Activated CD4-positive, alpha-beta T cell treated with anti-CD3 and anti-CD28 coated beads, Interleukin-2, amount 10 ng/mL, durations not matched to agents 24 days and 14 days (primary cell): ENCODE measurements at regions of chr1 and their contacts with region 1.

Region 1: DNA sequence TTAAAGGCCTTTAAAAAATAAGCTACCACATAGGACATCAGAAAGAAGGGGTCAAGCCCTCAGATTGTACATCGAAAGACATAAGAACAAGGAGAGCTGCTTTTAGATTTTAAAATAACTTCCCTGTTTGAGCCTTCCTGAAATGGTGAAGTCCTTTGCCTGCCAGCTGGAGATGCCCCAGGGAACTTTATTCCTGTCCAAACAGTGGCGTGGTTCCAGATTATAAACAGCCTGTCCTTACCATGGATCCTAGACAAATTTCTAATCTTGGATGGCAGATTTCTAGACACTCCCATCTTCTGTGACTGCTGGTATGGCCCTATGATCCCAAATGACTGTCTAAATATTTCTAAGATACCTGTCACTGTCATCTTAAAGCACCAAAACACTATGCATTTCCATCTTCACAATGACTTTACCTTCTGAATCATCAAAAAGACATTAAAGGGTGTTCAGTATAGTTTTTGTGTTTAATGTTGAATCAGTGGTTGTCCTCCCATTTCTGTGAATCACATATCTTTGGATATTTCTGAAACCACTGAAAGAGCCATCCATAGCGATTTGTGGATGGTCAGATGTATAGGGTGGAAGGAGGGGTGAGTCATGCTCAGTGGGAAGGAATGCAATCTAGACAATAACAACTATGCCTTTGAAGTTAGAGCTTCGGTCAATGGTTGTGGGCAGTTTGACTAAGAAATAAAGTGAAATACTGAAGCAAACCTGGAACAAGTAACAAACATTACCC is 23.2 kb downstream of the ILDR2 start:
- DNase-seq: no peak
- H3K4me3 Mint-ChIP-seq: no peak overlapping the region
- H3K27ac Mint-ChIP-seq: peak overlapping the region; percentile 12
- H3K4me1 Mint-ChIP-seq: peaks cover 21% of the 10 kb centered on the region
- H3K27me3 Mint-ChIP-seq: peaks cover 10% of the 10 kb centered on the region

Region 2: DNA sequence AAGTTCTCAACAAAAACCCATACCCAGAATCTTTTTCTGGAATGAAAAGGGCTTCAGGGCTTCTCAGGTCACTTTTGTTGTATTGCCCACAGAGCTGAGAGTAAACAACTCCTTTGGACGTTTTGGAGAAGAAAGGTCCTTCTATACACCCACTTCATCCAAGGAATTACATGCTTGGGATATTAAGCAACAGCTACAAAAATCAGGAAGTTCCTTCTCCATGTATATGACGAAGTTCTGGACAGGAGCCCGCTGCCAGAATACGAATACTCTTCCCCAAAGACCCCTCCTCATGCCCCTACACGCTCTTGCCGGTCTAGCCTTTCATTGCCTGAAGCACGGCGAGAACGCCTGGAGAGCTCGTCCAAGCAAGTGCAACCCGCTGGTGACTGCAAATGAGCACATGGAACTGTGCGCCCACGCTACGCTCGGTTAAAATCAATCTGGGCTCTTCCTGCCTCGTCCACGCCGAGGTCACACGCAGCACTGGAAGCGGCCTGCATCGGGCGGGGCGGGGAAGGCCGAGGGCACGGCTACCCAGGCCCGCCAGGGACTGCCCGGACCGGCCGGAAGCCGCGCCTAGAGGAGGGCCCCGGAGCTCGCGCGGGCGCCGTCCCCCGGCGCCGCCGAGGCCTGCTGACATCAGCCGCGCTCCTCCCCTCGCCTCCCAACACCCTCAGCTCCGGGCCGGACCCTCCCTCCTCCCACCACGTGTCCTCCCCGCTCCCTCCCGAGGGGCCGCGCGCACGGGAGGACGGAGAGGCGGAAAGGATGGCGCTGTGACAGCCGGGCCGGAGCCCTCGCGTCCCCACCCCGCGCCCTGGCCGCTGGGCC is 113.2 kb before region 1 on chr1 and contains the start of gene POGK:
- intact Hi-C with region 1: loop called (anchors 1 kb)
- DNase-seq: peak; percentile 95
- H3K4me3 Mint-ChIP-seq: peak within 1 kb of the TSS; percentile 95
- H3K27ac Mint-ChIP-seq: peak within 1 kb of the TSS; percentile 98
- H3K4me1 Mint-ChIP-seq: peaks cover 39% of the 10 kb centered on the region
- H3K27me3 Mint-ChIP-seq: peaks cover 2% of the 10 kb centered on the region
- total RNA-seq, gene POGK: 52.4 and 53.9 TPM in 2 replicates

Region 3: DNA sequence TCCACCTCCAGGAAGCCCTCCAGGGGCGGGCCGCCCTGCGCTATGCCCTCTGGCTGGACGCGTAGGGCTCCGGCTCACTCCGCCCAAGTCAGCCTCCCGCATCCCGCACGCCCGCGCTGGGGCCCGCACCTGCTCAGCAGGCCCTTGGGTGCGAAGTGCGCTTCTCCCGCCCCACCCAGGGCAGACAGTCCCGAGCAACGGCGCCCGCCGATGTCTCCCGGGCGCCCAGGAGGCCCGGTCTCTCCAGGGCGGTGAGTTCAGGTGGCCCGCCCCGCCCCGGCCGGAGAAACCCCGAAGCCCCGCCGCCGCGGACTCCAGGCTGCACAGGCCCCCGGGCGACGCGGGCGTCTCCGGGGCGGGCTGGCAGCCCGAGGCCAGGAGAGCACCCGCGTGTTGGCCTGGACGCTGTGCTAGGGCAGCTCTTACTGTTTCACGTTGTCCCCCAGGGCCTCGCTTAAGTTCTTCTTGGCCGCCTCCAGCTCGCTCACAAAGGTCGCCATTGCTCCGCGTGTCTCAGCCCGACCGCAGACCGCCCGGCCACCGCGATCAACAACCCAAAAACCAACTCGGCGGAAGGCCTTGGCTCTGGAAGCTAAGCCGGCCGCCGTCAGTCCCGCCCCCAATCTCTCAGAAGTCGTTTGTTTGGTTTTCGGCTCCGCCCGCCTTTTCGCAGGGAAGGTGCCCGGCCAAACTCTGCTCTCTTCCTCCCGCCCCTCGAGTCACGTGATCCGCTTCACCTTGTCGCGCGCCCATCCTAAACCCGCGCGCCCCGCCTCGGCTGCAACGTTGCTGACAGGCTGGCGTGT is 76.2 kb before region 1 on chr1 and contains the start of gene TADA1:
- intact Hi-C with region 1: loop called (anchors 2 kb)
- DNase-seq: peak; percentile 99
- H3K4me3 Mint-ChIP-seq: peak within 1 kb of the TSS; percentile 91
- H3K27ac Mint-ChIP-seq: peak within 1 kb of the TSS; percentile 100
- H3K4me1 Mint-ChIP-seq: peaks cover 46% of the 10 kb centered on the region
- H3K27me3 Mint-ChIP-seq: peaks cover 7% of the 10 kb centered on the region
- total RNA-seq, gene TADA1: 17.0 and 18.4 TPM in 2 replicates

Region 4: DNA sequence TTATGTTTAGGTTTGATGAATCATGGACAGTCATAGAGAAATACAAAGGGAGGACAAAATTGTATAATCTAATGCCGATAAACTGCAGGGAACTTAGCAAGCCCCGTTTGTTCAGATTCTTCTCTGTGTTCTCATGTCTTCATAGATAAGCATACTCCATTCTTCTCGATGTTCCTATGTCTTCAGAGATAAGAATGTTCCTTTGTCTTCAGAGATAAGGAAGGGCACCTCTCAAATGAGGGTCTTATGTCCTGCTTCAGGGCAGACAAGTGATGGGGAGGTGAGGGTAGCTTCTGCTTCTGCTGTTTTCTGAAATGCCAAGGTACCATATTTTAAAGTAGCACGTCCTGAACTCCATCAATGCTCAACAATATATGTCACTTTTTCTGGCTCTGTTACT is 56.4 kb before region 1 on chr1:
- intact Hi-C with region 1: no loop called
- DNase-seq: no peak
- H3K4me3 Mint-ChIP-seq: no peak overlapping the region
- H3K27ac Mint-ChIP-seq: no peak overlapping the region
- H3K4me1 Mint-ChIP-seq: no peaks in the 10 kb centered on the region
- H3K27me3 Mint-ChIP-seq: peaks cover 51% of the 10 kb centered on the region

Region 5: DNA sequence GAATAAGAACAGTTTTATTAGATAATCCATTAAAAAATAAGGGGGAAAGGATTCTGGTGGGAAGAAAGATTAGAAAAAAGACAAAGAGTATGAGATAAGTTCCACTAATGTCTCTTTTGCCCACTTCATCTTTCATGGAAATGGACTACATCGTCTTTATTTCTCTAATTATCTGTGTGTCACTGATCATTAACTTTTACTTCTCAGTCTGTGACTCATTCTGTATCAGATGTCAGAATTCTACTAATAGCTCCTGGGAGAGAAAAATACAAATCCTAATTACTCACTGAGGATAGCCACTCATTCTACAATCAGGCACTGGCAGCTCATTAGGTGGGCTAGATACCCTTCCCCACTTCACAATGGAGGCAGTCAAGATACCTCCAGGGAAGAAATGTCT is 18.5 kb before region 1 on chr1:
- intact Hi-C with region 1: no loop called
- DNase-seq: no peak
- H3K4me3 Mint-ChIP-seq: no peak overlapping the region
- H3K27ac Mint-ChIP-seq: no peak overlapping the region
- H3K4me1 Mint-ChIP-seq: peaks cover 2% of the 10 kb centered on the region
- H3K27me3 Mint-ChIP-seq: no peaks in the 10 kb centered on the region

Region 6: DNA sequence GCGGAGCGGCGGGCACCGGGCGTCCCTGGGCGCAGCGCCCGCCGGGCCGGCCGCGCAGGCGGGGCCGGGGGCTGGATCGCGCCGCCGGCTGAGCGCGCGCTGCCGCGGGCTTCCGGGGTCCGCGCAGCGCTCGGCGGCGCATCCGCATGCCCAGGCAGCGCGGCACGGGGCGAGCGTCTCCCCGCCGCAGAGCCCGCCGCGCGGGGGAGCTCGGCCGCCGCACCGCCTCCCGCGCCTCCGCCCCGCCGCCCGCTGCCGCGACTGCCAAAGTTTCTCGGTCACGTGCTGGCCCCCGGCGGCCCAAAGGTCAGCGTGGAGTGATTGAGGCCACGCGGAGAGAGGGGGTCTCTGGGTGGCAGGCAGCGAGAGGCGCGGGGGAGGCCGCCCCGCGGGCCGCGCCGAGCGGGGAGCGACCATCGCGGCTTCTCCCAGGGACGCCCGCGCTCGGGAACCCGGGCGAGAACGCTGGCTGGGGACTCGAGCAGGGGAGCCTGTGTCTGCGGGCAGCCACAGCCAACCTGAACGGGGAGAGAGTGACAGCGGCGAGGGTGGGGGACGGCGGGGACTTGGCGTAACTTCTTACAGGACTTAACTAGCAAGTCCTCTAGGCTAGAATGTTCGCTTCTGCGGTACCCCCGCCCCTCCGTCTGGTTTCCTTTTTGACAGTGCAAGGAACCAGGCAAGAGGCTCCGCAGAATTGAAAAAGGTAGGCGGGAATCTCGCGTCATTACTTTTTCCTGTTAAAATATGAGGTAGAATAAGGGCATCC is 23.4 kb after region 1 on chr1 and contains the start of gene ILDR2:
- intact Hi-C with region 1: loop called (anchors 1 kb)
- DNase-seq: peak; percentile 87
- H3K4me3 Mint-ChIP-seq: peak within 1 kb of the TSS; percentile 96
- H3K27ac Mint-ChIP-seq: peak within 1 kb of the TSS; percentile 96
- H3K4me1 Mint-ChIP-seq: peaks cover 47% of the 10 kb centered on the region
- H3K27me3 Mint-ChIP-seq: peaks cover 32% of the 10 kb centered on the region
- total RNA-seq, gene ILDR2: 10.3 and 12.5 TPM in 2 replicates

Region 7: DNA sequence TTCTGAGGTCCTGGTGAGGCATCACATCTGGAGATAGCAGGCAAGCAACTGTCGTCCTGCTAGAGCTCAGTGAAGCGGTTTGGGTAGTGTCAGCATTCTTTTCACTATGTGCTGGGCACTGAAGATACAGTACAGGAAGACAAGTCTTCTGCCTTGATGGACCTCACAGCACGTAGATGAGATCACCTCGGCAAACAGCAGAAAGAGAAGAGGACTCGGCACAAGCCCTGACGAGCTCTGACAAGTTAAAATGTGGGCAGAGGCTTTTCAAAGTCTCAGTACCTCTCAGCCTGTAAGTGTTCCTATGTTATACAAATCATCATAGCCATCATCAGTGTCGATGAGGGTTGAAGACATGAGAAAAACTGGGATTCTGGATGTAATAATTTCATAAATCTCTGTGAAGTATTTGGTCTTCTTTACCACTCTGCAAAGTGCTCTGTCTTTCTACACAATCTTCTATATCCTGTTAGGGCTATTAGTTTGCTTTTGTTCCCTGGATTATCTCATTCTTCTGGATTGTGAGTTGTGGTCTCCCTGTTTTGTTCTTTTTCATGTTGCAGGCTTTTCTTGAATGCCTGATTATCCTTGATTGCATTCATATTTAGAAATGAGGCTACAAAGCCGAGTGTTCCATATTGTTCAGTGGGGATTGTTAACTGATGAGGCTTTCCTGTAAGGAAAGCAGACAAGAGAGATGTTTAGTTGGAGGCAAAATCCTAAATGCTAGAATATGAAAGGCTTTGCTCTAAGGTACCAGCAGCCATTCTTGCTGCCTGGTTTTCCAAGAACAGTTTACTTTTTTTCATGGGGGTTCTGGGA is 61.1 kb after region 1 on chr1:
- intact Hi-C with region 1: no loop called
- DNase-seq: no peak
- H3K4me3 Mint-ChIP-seq: no peak overlapping the region
- H3K27ac Mint-ChIP-seq: no peak overlapping the region
- H3K4me1 Mint-ChIP-seq: peaks cover 4% of the 10 kb centered on the region
- H3K27me3 Mint-ChIP-seq: peaks cover 48% of the 10 kb centered on the region

Region 8: DNA sequence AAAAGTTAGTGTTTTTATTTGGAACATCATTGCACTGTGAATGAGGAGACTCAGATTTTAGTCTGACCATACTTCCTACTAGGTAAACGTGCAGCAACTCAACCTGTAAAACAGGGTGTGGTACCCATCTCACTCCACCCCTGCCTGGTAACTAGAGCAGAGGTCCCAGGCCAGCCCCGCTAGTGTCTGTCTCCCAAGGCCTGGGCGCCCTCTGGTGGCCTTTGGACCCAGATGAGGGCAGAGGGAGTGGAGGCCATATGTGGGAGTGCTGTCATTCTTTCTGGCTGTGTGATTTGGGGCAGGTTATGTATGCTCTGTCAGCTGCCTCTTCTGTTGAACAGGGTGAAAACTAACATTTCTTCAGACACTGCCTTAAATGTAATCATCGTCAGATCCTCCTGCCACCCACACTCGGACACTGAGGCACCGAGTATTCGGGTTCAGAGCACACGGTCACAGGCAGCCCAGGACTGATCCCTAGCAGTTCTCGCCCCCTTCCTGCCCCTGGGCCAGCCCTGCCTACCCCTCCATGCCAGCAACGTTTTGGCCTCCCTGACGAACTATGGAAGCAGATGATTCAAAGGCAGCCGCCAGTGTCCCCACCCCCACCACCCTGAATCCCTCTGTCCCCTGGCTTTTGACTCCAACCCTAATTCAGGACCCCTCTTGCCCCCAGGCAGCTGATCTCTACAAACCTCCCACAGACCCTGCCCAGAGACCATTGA is 490.1 kb after region 1 on chr1:
- intact Hi-C with region 1: no loop called
- DNase-seq: peak; percentile 95
- H3K4me3 Mint-ChIP-seq: peak overlapping the region; percentile 21
- H3K27ac Mint-ChIP-seq: peak overlapping the region; percentile 50
- H3K4me1 Mint-ChIP-seq: peaks cover 73% of the 10 kb centered on the region
- H3K27me3 Mint-ChIP-seq: no peaks in the 10 kb centered on the region